Transverse colon (tissue), 4 donors: ENCODE measurements at regions of chr19 and their contacts with region 1.

Region 1: GRCh38 chr19:13861732-13862531 is 15.0 kb upstream of the NANOS3 start:
- DNase-seq: peak; percentile 95
- H3K4me3 ChIP-seq: peak overlapping the region; percentile 33 to 50 (median 37)
- H3K27ac ChIP-seq: peak overlapping the region; percentile 87 to 93 (median 92)
- H3K4me1 ChIP-seq: peaks cover 5 to 23% (median 18%) of the 10 kb centered on the region in 4 donors
- H3K27me3 ChIP-seq: peaks cover 8% of the 10 kb centered on the region
- CTCF ChIP-seq: peak; percentile 98 to 100 (median 99)
- EP300 ChIP-seq: no peak
- POLR2A ChIP-seq: peak; percentile 49

Region 2: GRCh38 chr19:13588957-13589833 is 272.7 kb before region 1 on chr19:
- in situ Hi-C with region 1: loop called in 1 of 4 experiments (anchors 25 kb)
- intact Hi-C with region 1: no loop called
- DNase-seq: peak; percentile 72
- H3K4me3 ChIP-seq: no peak overlapping the region
- H3K27ac ChIP-seq: no peak overlapping the region
- H3K4me1 ChIP-seq: no peaks in the 10 kb centered on the region
- H3K27me3 ChIP-seq: peaks cover 23% of the 10 kb centered on the region
- CTCF ChIP-seq: peak; percentile 86 to 99 (median 98)
- EP300 ChIP-seq: no peak
- POLR2A ChIP-seq: no peak

Region 3: GRCh38 chr19:13604902-13605586 is 256.9 kb before region 1 on chr19:
- in situ Hi-C with region 1: loop called in 2 of 4 experiments (anchors 10 to 25 kb)
- intact Hi-C with region 1: no loop called
- DNase-seq: no peak
- H3K4me3 ChIP-seq: no peak overlapping the region
- H3K27ac ChIP-seq: no peak overlapping the region
- H3K4me1 ChIP-seq: peaks cover 0 to 2% (median 0%) of the 10 kb centered on the region in 4 donors
- H3K27me3 ChIP-seq: peaks cover 4% of the 10 kb centered on the region
- CTCF ChIP-seq: no peak
- EP300 ChIP-seq: no peak
- POLR2A ChIP-seq: no peak

Region 4: DNA sequence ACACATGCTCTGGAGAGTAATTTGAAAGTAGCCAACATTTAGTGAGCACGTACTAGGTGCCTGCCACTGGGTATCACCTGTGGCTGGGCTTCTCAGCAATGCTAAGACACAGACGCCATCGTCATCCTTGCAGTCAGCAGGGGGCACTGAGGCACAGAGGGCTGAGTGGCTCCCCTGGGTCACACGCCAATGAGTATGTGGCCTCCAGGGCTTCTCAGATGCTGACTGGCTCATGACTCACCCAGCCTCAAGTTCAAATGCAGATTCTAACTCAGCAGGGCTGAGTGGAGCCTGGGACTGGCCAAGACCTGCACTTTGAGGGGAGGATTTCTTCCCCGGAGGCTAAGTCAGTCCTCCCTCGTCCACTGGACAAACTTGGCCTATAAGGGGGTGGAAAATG is 240.5 kb before region 1 on chr19:
- in situ Hi-C with region 1: loop called in 1 of 4 experiments (anchors 25 kb)
- intact Hi-C with region 1: no loop called
- DNase-seq: no peak
- H3K4me3 ChIP-seq: no peak overlapping the region
- H3K27ac ChIP-seq: no peak overlapping the region
- H3K4me1 ChIP-seq: no peaks in the 10 kb centered on the region
- H3K27me3 ChIP-seq: peaks cover 44% of the 10 kb centered on the region
- CTCF ChIP-seq: no peak
- EP300 ChIP-seq: no peak
- POLR2A ChIP-seq: no peak

Region 5: GRCh38 chr19:13764101-13764807 is 97.7 kb before region 1 on chr19 and contains the start of gene MRI1:
- in situ Hi-C with region 1: loop called in 1 of 4 experiments (anchors 25 kb)
- intact Hi-C with region 1: loop called (anchors 10 kb)
- DNase-seq: peak; percentile 83
- H3K4me3 ChIP-seq: peak within 1 kb of the TSS; percentile 72 to 94 (median 80)
- H3K27ac ChIP-seq: peak within 1 kb of the TSS; percentile 72 to 89 (median 80)
- H3K4me1 ChIP-seq: peaks cover 7 to 18% (median 15%) of the 10 kb centered on the region in 4 donors
- H3K27me3 ChIP-seq: no peaks in the 10 kb centered on the region
- CTCF ChIP-seq: no peak
- EP300 ChIP-seq: no peak
- POLR2A ChIP-seq: peak; percentile 36
- total RNA-seq, gene MRI1: 63.0 to 304 (median 99.2) TPM

Region 6: GRCh38 chr19:13774217-13775191 is 87.4 kb before region 1 on chr19 and contains the start of gene C19orf53:
- in situ Hi-C with region 1: loop called in 1 of 4 experiments (anchors 25 kb)
- intact Hi-C with region 1: loop called (anchors 10 kb)
- DNase-seq: peak; percentile 92
- H3K4me3 ChIP-seq: peak within 1 kb of the TSS; percentile 96 to 99 (median 98)
- H3K27ac ChIP-seq: peak within 1 kb of the TSS; percentile 94 to 97 (median 96)
- H3K4me1 ChIP-seq: peaks cover 11 to 17% (median 14%) of the 10 kb centered on the region in 4 donors
- H3K27me3 ChIP-seq: no peaks in the 10 kb centered on the region
- CTCF ChIP-seq: no peak
- EP300 ChIP-seq: no peak
- POLR2A ChIP-seq: peak; percentile 96
- total RNA-seq, gene C19orf53: 48.6 to 111 (median 94.2) TPM

Region 7: DNA sequence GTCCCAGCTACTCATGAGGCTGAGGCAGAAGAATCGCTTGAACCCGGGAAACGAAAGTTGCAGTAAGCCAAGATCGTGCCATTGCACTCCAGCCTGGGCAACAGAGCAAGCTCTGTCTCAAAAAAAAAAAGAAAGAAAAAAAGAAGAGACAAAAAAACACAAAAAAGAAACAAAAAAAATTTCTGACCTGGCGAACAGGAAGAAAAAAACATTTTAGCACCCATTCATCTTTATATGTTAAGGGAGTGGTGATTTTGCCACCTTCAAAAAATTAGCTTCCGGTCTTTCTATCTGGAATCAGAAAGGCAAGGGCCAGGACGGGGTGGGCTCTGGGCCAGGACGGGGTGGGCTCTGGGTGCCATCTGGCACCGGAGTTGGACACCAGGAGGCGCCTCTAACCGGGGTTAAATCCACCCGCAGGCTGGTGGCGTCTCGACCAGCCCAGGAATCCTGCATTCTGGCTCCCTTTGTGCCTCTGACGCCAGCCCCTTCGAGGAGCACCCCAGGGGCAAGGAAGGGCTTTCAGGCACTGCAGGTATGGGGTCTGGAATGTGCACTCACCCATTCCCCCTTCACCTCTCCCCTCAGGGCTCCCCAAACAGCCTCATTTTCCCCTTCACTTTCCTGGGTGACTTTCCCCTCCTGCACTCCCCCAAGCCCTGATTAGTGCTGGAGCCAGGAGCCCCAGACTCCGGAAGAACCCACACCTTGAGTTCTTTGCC is 77.0 kb before region 1 on chr19:
- in situ Hi-C with region 1: loop called in 3 of 4 experiments (anchors 5 kb)
- intact Hi-C with region 1: loop called (anchors 2 kb)
- DNase-seq: peak; percentile 79
- H3K4me3 ChIP-seq: peak overlapping the region in 1 of 4 donors; percentile 6
- H3K27ac ChIP-seq: peak overlapping the region in 3 of 4 donors; percentile 1 to 26 (median 4)
- H3K4me1 ChIP-seq: peaks cover 5 to 59% (median 36%) of the 10 kb centered on the region in 4 donors
- H3K27me3 ChIP-seq: no peaks in the 10 kb centered on the region
- CTCF ChIP-seq: peak; percentile 70 to 84 (median 71)
- EP300 ChIP-seq: no peak
- POLR2A ChIP-seq: no peak

Region 8: GRCh38 chr19:13817018-13817614 is 44.8 kb before region 1 on chr19:
- in situ Hi-C with region 1: no loop called
- intact Hi-C with region 1: no loop called
- DNase-seq: peak; percentile 82
- H3K4me3 ChIP-seq: peak overlapping the region in 3 of 4 donors; percentile 21 to 44 (median 39)
- H3K27ac ChIP-seq: peak overlapping the region; percentile 74 to 86 (median 78)
- H3K4me1 ChIP-seq: no peaks in the 10 kb centered on the region
- H3K27me3 ChIP-seq: no peaks in the 10 kb centered on the region
- CTCF ChIP-seq: no peak
- EP300 ChIP-seq: no peak
- POLR2A ChIP-seq: no peak